ENCODE measurements at regions of chrX and their contacts with region 1.

Region 1: DNA sequence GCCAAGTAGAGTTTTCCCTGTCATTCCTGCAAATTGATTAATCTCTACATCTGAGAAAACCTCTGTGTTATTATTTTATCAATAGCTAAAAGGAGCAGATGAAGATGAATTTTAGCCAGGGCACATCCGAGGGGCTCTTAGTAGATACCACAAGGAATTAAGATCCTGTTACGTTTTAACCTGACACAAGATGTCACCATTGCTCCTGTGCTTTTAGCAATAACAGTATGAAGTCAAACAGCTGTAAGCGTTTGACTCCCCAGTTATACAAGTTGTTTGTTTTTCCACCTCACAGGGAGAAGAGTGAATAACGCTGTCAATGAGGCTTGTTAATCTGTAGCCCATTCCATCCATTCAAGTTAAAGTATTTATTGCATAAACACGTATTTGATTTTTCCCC is 76.0 kb upstream of the AP1S2 start:
- DNase-seq: no peak
- H3K4me3 ChIP-seq: no peak overlapping the region
- H3K27ac ChIP-seq: no peak overlapping the region
- H3K4me1 ChIP-seq: no peaks in the 10 kb centered on the region
- H3K27me3 ChIP-seq: no peaks in the 10 kb centered on the region
- CTCF ChIP-seq: peak; percentile 27; the same call in 1 of the 2 replicates

Region 2: GRCh38 chrX:15864629-15865028 is 66.0 kb before region 1 on chrX:
- CTCF ChIA-PET with region 1: no interaction called
- POLR2A ChIA-PET with region 1: no interaction called
- intact Hi-C with region 1: no loop called
- DNase-seq: no peak
- H3K4me3 ChIP-seq: no peak overlapping the region
- H3K27ac ChIP-seq: no peak overlapping the region
- H3K4me1 ChIP-seq: no peaks in the 10 kb centered on the region
- H3K27me3 ChIP-seq: no peaks in the 10 kb centered on the region
- CTCF ChIP-seq: no peak

Region 3: GRCh38 chrX:16436348-16437188 is 506.0 kb after region 1 on chrX:
- CTCF ChIA-PET with region 1: interaction called, 3 read pairs
- POLR2A ChIA-PET with region 1: no interaction called
- intact Hi-C with region 1: loop called (anchors 5 kb)
- DNase-seq: peak; percentile 42 to 60
- H3K4me3 ChIP-seq: no peak overlapping the region
- H3K27ac ChIP-seq: no peak overlapping the region
- H3K4me1 ChIP-seq: no peaks in the 10 kb centered on the region
- H3K27me3 ChIP-seq: no peaks in the 10 kb centered on the region
- CTCF ChIP-seq: peak; percentile 75

Measured in PC-9 (cell line).